Activated CD4-positive, alpha-beta memory T cell treated with anti-CD3 and anti-CD28 coated beads for 36 hours (primary cell): ENCODE measurements at regions of chr6 and their contacts with region 1.

Region 1: GRCh38 chr6:119349323-119350042 is at the start of gene MAN1A1:
- DNase-seq: peak; percentile 92
- H3K4me3 Mint-ChIP-seq: peak within 1 kb of the TSS; percentile 94
- H3K27ac Mint-ChIP-seq: peak within 1 kb of the TSS; percentile 93
- H3K4me1 Mint-ChIP-seq: peaks cover 43% of the 10 kb centered on the region
- H3K27me3 Mint-ChIP-seq: no peaks in the 10 kb centered on the region
- total RNA-seq, gene MAN1A1: 21.8 to 23.9 TPM

Region 2: DNA sequence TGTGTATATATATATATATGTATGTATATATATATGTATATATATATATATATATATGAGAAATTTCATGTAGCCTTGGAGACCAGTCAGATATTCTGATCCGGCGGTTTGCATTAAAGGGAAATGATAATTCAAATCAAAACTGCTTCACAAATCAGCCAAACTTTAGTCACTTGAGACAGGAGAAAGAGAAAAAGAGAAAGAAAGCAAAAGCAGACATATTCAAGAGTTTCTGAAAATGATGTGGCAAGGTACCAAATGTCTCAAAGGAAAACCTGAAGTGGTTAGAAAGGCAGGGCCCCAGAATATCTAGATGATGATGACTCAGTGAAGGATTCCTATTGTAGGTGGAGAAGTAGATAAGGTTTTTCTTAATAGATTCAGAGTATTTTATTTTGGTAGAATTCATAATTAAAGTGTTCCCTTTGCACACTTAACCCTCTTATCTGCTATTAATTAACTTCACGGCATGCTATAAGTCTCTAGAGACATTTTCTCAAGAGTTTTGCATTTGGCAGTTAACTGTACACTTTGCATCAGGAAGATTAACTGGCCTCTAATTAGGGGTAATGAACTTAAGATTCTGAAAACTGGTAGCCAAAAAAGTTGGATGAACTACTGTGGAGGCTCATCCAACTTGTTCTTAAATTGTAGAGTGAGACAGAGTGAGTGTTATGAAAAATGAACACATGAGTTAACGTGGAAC is 505.6 kb before region 1 on chr6:
- CTCF ChIA-PET with region 1: no interaction called
- POLR2A ChIA-PET with region 1: no interaction called
- intact Hi-C with region 1: loop called (anchors 5 kb)
- DNase-seq: no peak
- H3K4me3 Mint-ChIP-seq: peak overlapping the region; percentile 33
- H3K27ac Mint-ChIP-seq: peak overlapping the region; percentile 34
- H3K4me1 Mint-ChIP-seq: peaks cover 32% of the 10 kb centered on the region
- H3K27me3 Mint-ChIP-seq: no peaks in the 10 kb centered on the region

Region 3: GRCh38 chr6:119129148-119129967 is 220.1 kb before region 1 on chr6:
- CTCF ChIA-PET with region 1: interaction called, 5 read pairs
- POLR2A ChIA-PET with region 1: no interaction called
- intact Hi-C with region 1: loop called (anchors 2 kb)
- DNase-seq: no peak
- H3K4me3 Mint-ChIP-seq: no peak overlapping the region
- H3K27ac Mint-ChIP-seq: no peak overlapping the region
- H3K4me1 Mint-ChIP-seq: peaks cover 2% of the 10 kb centered on the region
- H3K27me3 Mint-ChIP-seq: no peaks in the 10 kb centered on the region

Region 4: GRCh38 chr6:119337252-119337651 is 12.2 kb before region 1 on chr6:
- CTCF ChIA-PET with region 1: interaction called, 7 read pairs
- POLR2A ChIA-PET with region 1: interaction called, 5 read pairs
- intact Hi-C with region 1: loop called (anchors 1 kb)
- DNase-seq: no peak
- H3K4me3 Mint-ChIP-seq: no peak overlapping the region
- H3K27ac Mint-ChIP-seq: no peak overlapping the region
- H3K4me1 Mint-ChIP-seq: peaks cover 34% of the 10 kb centered on the region
- H3K27me3 Mint-ChIP-seq: no peaks in the 10 kb centered on the region

Region 5: GRCh38 chr6:119368951-119369350 is 19.5 kb after region 1 on chr6:
- CTCF ChIA-PET with region 1: no interaction called
- POLR2A ChIA-PET with region 1: no interaction called
- intact Hi-C with region 1: no loop called
- DNase-seq: no peak
- H3K4me3 Mint-ChIP-seq: no peak overlapping the region
- H3K27ac Mint-ChIP-seq: no peak overlapping the region
- H3K4me1 Mint-ChIP-seq: no peaks in the 10 kb centered on the region
- H3K27me3 Mint-ChIP-seq: no peaks in the 10 kb centered on the region

Region 6: GRCh38 chr6:119379809-119380208 is 30.3 kb after region 1 on chr6:
- CTCF ChIA-PET with region 1: no interaction called
- POLR2A ChIA-PET with region 1: no interaction called
- intact Hi-C with region 1: no loop called
- DNase-seq: no peak
- H3K4me3 Mint-ChIP-seq: no peak overlapping the region
- H3K27ac Mint-ChIP-seq: no peak overlapping the region
- H3K4me1 Mint-ChIP-seq: no peaks in the 10 kb centered on the region
- H3K27me3 Mint-ChIP-seq: no peaks in the 10 kb centered on the region

Region 7: GRCh38 chr6:119856136-119856535 is 506.7 kb after region 1 on chr6:
- CTCF ChIA-PET with region 1: interaction called, 3 read pairs
- POLR2A ChIA-PET with region 1: no interaction called
- intact Hi-C with region 1: loop called (anchors 1 kb)
- DNase-seq: peak; percentile 27
- H3K4me3 Mint-ChIP-seq: no peak overlapping the region
- H3K27ac Mint-ChIP-seq: no peak overlapping the region
- H3K4me1 Mint-ChIP-seq: peaks cover 14% of the 10 kb centered on the region
- H3K27me3 Mint-ChIP-seq: no peaks in the 10 kb centered on the region